Dendritic cell treated with granulocyte-macrophage colony-stimulating factor and Interleukin-4, amounts not matched to agents 40 ng/mL and 50 ng/mL, for 4 days (primary cell): ENCODE measurements at regions of chr3 and their contacts with region 1.

Region 1: GRCh38 chr3:125594581-125595011 is 701 bp downstream of the OSBPL11 start:
- H3K4me3 Mint-ChIP-seq: peak overlapping the region; percentile 92
- H3K27ac Mint-ChIP-seq: peak overlapping the region; percentile 97
- H3K4me1 Mint-ChIP-seq: peaks cover 30% of the 10 kb centered on the region
- H3K27me3 Mint-ChIP-seq: no peaks in the 10 kb centered on the region

Region 2: GRCh38 chr3:124923833-124924232 is 670.8 kb before region 1 on chr3:
- intact Hi-C with region 1: no loop called
- H3K4me3 Mint-ChIP-seq: no peak overlapping the region
- H3K27ac Mint-ChIP-seq: no peak overlapping the region
- H3K4me1 Mint-ChIP-seq: peaks cover 26% of the 10 kb centered on the region
- H3K27me3 Mint-ChIP-seq: peaks cover 1% of the 10 kb centered on the region

Region 3: DNA sequence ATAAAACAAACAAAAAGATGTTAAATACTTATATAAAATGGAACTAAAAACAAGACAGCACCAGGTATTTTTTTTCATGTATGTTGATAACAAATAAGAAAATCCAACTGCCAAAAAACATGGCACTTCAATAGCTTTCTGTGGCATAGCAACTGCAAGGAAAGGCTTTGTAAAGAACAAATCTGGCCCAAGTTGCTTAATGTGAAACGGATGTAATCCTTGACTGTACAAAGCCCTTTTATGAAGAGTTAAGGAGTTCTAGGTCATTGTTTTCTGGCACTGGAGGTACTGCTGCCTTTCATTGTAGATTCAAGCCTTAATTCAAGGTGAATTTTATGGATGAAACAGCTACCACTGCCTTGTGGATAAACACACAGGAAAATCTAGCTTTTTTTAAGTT is 313.2 kb before region 1 on chr3:
- intact Hi-C with region 1: no loop called
- H3K4me3 Mint-ChIP-seq: no peak overlapping the region
- H3K27ac Mint-ChIP-seq: no peak overlapping the region
- H3K4me1 Mint-ChIP-seq: no peaks in the 10 kb centered on the region
- H3K27me3 Mint-ChIP-seq: no peaks in the 10 kb centered on the region

Region 4: DNA sequence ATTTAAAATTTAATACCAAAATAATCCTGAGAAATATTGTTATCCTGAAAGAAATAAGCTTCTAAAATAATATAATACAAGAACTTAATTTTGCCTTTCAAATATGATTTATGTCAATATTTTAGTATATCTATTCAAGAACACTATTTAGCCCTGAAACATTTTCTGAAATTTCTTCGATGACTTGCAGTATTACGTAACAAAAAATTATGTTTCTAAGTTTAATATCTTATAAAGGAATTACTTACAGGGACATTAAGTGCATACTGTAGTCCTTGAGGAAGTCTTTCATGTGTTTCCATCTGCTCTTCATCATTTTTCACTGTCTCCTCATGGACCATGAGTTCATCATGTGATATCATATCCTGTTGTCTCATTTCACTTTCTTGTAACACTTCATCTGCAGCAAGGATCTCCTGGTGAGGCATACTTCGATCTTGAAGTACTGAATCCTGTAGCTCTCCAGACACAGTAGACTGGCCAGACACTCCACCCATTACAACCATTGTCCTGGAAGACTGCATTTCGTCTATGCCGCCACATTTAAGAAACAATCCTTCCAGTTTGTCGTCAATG is 281.4 kb before region 1 on chr3:
- intact Hi-C with region 1: no loop called
- H3K4me3 Mint-ChIP-seq: no peak overlapping the region
- H3K27ac Mint-ChIP-seq: no peak overlapping the region
- H3K4me1 Mint-ChIP-seq: peaks cover 42% of the 10 kb centered on the region
- H3K27me3 Mint-ChIP-seq: no peaks in the 10 kb centered on the region

Region 5: GRCh38 chr3:125632597-125632996 is 38.0 kb after region 1 on chr3:
- intact Hi-C with region 1: loop called (anchors 2 kb)
- H3K4me3 Mint-ChIP-seq: no peak overlapping the region
- H3K27ac Mint-ChIP-seq: peak overlapping the region; percentile 92
- H3K4me1 Mint-ChIP-seq: peaks cover 33% of the 10 kb centered on the region
- H3K27me3 Mint-ChIP-seq: peaks cover 9% of the 10 kb centered on the region